ENCODE measurements at regions of chr12 and their contacts with region 1.

Region 1: GRCh38 chr12:29073628-29074239 is 75.3 kb upstream of the FAR2 start:
- DNase-seq: peak; percentile 15
- ATAC-seq: peak; percentile 64
- H3K4me3 Mint-ChIP-seq: no peak overlapping the region
- H3K27ac Mint-ChIP-seq: no peak overlapping the region
- H3K4me1 Mint-ChIP-seq: no peaks in the 10 kb centered on the region
- H3K27me3 Mint-ChIP-seq: peaks cover 10% of the 10 kb centered on the region
- CTCF ChIP-seq: peak; percentile 69

Region 2: GRCh38 chr12:29088611-29089219 is 15.0 kb after region 1 on chr12:
- CTCF ChIA-PET with region 1: interaction called, 20 read pairs
- POLR2A ChIA-PET with region 1: no interaction called
- intact Hi-C with region 1: no loop called
- DNase-seq: no peak
- ATAC-seq: no peak
- H3K4me3 Mint-ChIP-seq: no peak overlapping the region
- H3K27ac Mint-ChIP-seq: no peak overlapping the region
- H3K4me1 Mint-ChIP-seq: no peaks in the 10 kb centered on the region
- H3K27me3 Mint-ChIP-seq: no peaks in the 10 kb centered on the region
- CTCF ChIP-seq: peak; percentile 62

Region 3: GRCh38 chr12:29110506-29111442 is 37.0 kb after region 1 on chr12:
- CTCF ChIA-PET with region 1: no interaction called
- POLR2A ChIA-PET with region 1: no interaction called
- intact Hi-C with region 1: no loop called
- DNase-seq: no peak
- ATAC-seq: no peak
- H3K4me3 Mint-ChIP-seq: no peak overlapping the region
- H3K27ac Mint-ChIP-seq: no peak overlapping the region
- H3K4me1 Mint-ChIP-seq: no peaks in the 10 kb centered on the region
- H3K27me3 Mint-ChIP-seq: no peaks in the 10 kb centered on the region
- CTCF ChIP-seq: no peak

Region 4: GRCh38 chr12:29304388-29304787 is 230.7 kb after region 1 on chr12:
- CTCF ChIA-PET with region 1: interaction called, 11 read pairs
- POLR2A ChIA-PET with region 1: no interaction called
- intact Hi-C with region 1: no loop called
- DNase-seq: no peak
- ATAC-seq: no peak
- H3K4me3 Mint-ChIP-seq: no peak overlapping the region
- H3K27ac Mint-ChIP-seq: no peak overlapping the region
- H3K4me1 Mint-ChIP-seq: no peaks in the 10 kb centered on the region
- H3K27me3 Mint-ChIP-seq: no peaks in the 10 kb centered on the region
- CTCF ChIP-seq: no peak

Region 5: DNA sequence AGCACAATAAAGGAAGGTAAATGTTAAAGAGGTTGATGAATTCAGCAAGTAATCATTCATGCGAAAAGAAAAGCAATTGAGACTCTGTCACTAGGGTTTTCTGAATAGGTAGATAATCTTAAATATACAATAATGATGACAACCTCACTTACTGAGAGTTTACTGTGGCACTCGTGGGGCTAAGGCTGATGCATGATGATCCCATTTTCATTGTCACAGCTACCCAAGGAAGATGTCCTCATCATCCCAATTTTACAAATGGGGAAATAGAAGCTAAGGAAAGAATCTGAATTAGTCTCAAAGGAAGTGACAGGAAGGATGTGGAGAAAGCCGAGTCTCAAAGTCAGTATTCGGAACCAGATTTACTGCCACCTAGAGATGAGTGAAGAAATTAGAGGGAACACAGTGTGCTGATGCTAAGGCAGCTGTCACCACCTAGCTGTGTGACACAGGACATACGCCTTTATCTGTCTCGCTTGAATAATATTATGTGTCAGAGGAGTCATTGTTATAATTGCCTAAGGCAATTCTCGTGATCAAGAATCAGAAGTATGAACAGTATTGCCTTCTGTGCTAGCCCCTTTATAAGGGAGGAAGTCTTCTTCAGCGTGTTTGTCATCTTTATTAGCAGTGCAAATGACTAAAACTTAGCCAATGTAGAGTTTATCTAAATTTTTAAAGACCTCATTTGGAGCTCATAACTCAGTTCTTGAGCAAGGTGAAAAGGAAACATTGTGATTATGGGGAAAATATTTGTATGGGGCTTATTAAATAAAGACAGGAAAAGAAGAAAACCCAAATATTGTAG is 244.0 kb after region 1 on chr12:
- CTCF ChIA-PET with region 1: interaction called, 45 read pairs
- POLR2A ChIA-PET with region 1: no interaction called
- intact Hi-C with region 1: loop called (anchors 5 kb)
- DNase-seq: peak; percentile 52
- ATAC-seq: peak; percentile 100
- H3K4me3 Mint-ChIP-seq: no peak overlapping the region
- H3K27ac Mint-ChIP-seq: no peak overlapping the region
- H3K4me1 Mint-ChIP-seq: peaks cover 10% of the 10 kb centered on the region
- H3K27me3 Mint-ChIP-seq: no peaks in the 10 kb centered on the region
- CTCF ChIP-seq: peak; percentile 92